Activated CD4-positive, alpha-beta T cell treated with anti-CD3 and anti-CD28 coated beads for 36 hours (primary cell): ENCODE measurements at regions of chr6 and their contacts with region 1.

Region 1: DNA sequence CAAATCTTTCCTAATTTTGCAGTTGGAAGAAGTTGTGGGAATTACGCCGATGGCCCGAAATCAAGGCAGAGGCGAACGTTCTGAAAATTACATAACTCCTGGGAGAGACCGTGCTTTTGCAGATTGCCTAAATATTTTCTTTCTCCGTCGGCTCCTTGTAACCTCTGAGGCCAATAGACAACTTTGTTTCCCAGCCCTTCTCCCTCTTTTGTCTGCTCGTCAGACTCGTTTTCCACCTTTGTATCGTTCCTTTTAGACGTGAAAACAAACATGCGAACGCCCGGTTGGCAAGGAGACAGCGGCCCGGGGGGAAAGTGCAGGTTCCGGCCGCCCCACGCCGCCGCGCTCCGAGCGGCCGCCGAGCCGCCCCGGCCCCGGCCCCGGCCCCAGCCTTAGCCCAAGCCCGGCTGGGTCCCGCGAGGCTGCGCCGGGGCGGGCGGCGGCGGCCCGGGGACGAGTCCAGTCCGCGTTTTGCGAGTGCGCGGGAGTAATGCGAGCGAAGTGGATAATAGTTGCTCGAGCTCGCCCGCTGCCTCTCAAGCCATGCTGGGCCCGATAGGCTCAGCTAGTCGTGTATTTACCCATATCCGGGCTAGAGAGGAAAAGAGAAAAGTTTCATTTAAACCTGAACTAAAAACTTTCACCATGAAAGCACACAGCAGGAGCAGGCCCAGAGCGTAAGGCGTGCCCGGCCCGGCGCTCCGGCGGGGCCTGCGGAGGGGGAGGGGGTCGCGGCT is at the start of gene ARID1B:
- DNase-seq: peak; percentile 82
- ATAC-seq: peak; percentile 32
- H3K4me3 Mint-ChIP-seq: peak within 1 kb of the TSS; percentile 85
- H3K27ac Mint-ChIP-seq: peak within 1 kb of the TSS; percentile 98
- H3K4me1 Mint-ChIP-seq: peaks cover 13% of the 10 kb centered on the region
- H3K27me3 Mint-ChIP-seq: no peaks in the 10 kb centered on the region
- total RNA-seq, gene ARID1B: 42.2 to 53.6 TPM

Region 2: DNA sequence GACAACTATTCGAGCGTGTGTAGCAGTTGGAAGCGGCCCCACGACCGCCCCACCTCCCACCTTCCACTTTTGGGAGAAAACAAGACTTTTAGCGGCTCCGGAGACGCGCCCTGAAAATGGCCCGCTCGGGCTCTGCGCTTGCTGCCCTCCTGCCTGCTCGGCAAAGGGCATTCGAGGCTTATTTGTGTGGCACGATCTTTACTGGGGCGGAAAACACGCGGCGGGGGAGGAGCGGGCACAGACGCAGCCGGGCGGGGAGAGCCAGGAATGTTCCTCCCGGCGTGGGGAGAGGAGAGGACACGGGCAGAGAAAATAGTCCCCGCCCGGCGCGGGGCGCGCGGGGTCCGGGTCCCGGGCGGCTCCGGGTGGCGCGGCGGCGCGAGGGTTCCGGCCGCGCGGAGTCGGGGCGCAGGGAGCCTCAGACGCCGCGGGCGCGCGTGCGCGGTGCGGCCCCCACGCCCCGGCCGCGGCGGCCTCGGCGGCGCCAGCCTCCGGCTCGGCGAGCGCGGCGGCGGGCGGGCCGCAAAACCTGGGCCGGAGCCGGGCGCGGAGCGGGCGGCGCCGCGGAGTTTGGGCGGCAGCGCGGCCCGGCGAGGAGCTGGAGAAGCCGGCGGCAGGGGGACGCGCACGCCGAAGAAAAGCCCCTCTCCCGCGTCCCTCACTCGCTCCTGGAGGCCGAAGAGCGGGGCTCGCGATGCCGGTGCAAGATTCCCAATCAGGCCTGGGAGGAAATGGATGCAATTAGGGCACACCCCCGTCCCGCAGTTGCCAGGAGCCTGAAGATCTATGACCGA is 89.8 kb before region 1 on chr6:
- CTCF ChIA-PET with region 1: interaction called, 5 read pairs
- POLR2A ChIA-PET with region 1: no interaction called
- intact Hi-C with region 1: loop called (anchors 1 kb)
- DNase-seq: peak; percentile 81
- ATAC-seq: peak; percentile 88
- H3K4me3 Mint-ChIP-seq: peak overlapping the region; percentile 80
- H3K27ac Mint-ChIP-seq: peak overlapping the region; percentile 95
- H3K4me1 Mint-ChIP-seq: peaks cover 39% of the 10 kb centered on the region
- H3K27me3 Mint-ChIP-seq: peaks cover 2% of the 10 kb centered on the region

Region 3: DNA sequence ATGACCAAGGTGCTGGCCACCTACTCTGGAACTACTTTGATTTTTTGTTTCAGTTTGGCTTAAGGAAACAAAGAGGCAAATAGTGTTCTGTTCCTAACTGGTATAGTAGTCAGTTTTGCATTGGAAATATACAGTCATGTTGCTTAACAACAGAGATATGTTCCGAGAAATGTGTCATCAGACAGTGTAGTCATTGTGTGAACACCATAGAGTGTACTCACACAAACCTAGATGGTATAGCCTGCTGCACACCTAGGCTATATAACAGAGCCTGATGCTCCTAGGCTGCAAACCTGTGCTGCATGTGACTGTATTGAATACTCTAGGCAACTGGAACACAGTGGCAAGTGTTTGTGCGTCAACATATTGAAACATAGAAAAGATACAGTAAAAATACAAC is 80.6 kb after region 1 on chr6:
- CTCF ChIA-PET with region 1: no interaction called
- POLR2A ChIA-PET with region 1: interaction called, 5 read pairs
- intact Hi-C with region 1: loop called (anchors 1 to 2 kb)
- DNase-seq: peak; percentile 58
- ATAC-seq: peak; percentile 94
- H3K4me3 Mint-ChIP-seq: peak overlapping the region; percentile 4
- H3K27ac Mint-ChIP-seq: peak overlapping the region; percentile 93
- H3K4me1 Mint-ChIP-seq: peaks cover 85% of the 10 kb centered on the region
- H3K27me3 Mint-ChIP-seq: no peaks in the 10 kb centered on the region

Region 4: GRCh38 chr6:156953479-156954146 is 176.6 kb after region 1 on chr6:
- CTCF ChIA-PET with region 1: no interaction called
- POLR2A ChIA-PET with region 1: no interaction called
- intact Hi-C with region 1: loop called (anchors 2 to 5 kb)
- DNase-seq: peak; percentile 48
- ATAC-seq: peak; percentile 44
- H3K4me3 Mint-ChIP-seq: no peak overlapping the region
- H3K27ac Mint-ChIP-seq: peak overlapping the region; percentile 43
- H3K4me1 Mint-ChIP-seq: peaks cover 66% of the 10 kb centered on the region
- H3K27me3 Mint-ChIP-seq: no peaks in the 10 kb centered on the region

Region 5: GRCh38 chr6:157099912-157100593 is 323.0 kb after region 1 on chr6:
- CTCF ChIA-PET with region 1: no interaction called
- POLR2A ChIA-PET with region 1: no interaction called
- intact Hi-C with region 1: loop called (anchors 5 kb)
- DNase-seq: peak; percentile 72
- ATAC-seq: peak; percentile 98
- H3K4me3 Mint-ChIP-seq: peak overlapping the region; percentile 23
- H3K27ac Mint-ChIP-seq: peak overlapping the region; percentile 83
- H3K4me1 Mint-ChIP-seq: peaks cover 56% of the 10 kb centered on the region
- H3K27me3 Mint-ChIP-seq: no peaks in the 10 kb centered on the region

Region 6: DNA sequence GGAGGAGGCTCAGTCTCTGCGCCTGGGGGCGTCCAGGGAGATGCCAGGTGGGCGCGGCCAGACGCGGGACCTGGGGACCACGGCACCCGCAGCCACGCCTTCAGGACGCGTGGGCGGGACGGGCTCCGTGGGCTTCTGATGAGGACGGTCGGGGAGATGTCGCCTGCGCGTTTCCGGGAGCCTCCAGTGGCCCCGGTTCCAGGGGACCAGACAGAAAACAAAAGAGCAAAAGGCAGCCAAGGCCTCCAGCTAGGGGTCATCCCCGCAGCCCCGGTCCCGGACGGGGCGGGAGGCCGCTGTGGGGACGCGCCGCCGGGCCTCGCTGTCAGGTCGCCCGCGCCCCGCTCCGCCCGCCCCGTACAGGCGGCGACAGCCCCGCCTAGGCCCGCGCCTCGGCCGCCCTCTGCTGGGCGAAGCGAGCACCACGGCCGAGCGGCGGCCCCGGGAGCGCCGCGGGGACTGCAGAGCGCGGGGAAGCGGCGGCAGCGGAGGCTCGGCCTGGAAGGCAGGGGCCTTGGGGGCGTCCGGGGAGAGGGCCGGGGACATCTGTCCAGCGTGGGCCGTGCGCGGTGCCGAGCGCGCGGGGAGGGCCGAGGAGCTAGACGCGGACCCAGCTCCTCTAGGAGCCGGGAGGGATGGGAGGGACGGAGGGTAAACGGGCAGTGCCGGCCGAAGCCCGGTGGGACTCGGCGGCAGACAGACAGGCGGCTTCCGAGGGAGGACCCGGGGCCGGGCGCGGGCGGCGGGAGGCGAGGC is 497.6 kb after region 1 on chr6:
- CTCF ChIA-PET with region 1: no interaction called
- POLR2A ChIA-PET with region 1: no interaction called
- intact Hi-C with region 1: loop called in 1 of 2 experiments (anchors 2 kb)
- DNase-seq: peak; percentile 89
- ATAC-seq: peak; percentile 93
- H3K4me3 Mint-ChIP-seq: peak overlapping the region; percentile 73
- H3K27ac Mint-ChIP-seq: peak overlapping the region; percentile 83
- H3K4me1 Mint-ChIP-seq: peaks cover 9% of the 10 kb centered on the region
- H3K27me3 Mint-ChIP-seq: no peaks in the 10 kb centered on the region